Activated CD4-positive, alpha-beta T cell treated with anti-CD3 and anti-CD28 coated beads for 36 hours (primary cell): ENCODE measurements at regions of chr11 and their contacts with region 1.

Region 1: DNA sequence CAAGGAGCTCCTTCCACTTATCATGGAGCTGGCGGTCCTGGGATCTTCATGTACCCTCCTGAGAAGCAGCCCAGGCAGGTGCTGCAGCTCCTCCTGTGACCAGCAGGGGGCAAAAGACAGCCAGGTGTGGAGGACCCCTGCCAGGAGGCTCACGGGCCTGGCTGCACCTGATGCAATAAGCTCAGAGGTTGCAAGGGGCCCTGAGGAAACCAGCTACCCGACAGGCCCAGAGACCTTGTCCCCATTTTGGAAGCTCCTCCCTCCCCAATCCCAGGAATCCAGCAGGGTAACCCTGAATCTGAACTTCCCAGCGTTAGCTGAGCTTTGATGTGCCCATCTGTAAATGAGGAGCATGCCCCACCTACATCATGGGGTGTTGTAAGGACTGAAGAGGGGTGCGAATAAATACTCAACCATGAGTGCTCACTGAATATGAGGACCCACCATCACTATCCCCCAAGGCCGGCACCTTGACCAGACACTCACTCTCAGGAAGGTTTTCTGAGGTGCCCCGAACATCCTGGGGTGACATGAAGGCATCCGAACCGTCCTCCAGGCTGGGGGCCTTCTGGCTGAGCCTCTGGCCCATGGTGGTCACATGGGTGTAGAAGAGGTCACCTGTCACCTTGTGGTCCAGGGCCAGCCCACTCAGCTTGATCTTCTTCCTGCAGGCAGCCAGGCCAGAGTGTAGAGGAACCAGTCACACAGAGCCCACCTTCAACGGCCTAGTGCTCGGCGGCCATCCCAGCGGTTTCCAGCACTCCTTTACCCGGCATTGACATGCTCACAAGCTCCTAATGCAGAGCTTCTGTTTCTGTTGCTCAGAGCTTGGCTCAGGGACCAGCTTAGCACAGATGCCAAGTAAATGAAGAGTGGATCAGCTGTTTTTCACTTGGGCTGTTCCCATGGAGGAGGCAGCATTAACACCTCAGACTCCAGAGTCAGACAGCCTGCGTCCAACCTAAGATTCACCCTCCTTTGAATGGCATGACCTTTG is 21.7 kb downstream of the SLC43A1 start:
- DNase-seq: peak; percentile 88
- ATAC-seq: peak; percentile 81
- H3K4me3 Mint-ChIP-seq: no peak overlapping the region
- H3K27ac Mint-ChIP-seq: peak overlapping the region; percentile 89
- H3K4me1 Mint-ChIP-seq: peaks cover 9% of the 10 kb centered on the region
- H3K27me3 Mint-ChIP-seq: no peaks in the 10 kb centered on the region

Region 2: DNA sequence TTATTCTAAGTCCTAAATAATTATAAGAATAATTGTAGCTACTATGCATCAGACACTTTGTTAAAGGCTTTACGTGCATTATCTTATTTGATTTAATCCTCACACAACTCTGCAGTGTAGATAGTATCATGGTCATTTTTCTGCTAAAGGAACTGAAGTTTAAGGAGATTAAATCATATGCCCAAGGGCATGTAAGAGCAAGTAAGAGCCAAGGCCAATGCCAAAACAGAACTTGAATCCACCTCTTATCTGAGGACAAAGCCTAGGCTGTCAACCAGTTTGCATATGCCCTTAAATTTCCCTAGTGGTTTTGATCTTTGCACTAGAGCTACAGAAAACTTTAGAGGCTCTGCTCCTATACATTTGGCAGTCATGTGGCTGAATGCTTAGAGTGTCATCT is 570.7 kb before region 1 on chr11:
- CTCF ChIA-PET with region 1: no interaction called
- POLR2A ChIA-PET with region 1: no interaction called
- intact Hi-C with region 1: no loop called
- DNase-seq: no peak
- ATAC-seq: no peak
- H3K4me3 Mint-ChIP-seq: no peak overlapping the region
- H3K27ac Mint-ChIP-seq: no peak overlapping the region
- H3K4me1 Mint-ChIP-seq: no peaks in the 10 kb centered on the region
- H3K27me3 Mint-ChIP-seq: no peaks in the 10 kb centered on the region

Region 3: DNA sequence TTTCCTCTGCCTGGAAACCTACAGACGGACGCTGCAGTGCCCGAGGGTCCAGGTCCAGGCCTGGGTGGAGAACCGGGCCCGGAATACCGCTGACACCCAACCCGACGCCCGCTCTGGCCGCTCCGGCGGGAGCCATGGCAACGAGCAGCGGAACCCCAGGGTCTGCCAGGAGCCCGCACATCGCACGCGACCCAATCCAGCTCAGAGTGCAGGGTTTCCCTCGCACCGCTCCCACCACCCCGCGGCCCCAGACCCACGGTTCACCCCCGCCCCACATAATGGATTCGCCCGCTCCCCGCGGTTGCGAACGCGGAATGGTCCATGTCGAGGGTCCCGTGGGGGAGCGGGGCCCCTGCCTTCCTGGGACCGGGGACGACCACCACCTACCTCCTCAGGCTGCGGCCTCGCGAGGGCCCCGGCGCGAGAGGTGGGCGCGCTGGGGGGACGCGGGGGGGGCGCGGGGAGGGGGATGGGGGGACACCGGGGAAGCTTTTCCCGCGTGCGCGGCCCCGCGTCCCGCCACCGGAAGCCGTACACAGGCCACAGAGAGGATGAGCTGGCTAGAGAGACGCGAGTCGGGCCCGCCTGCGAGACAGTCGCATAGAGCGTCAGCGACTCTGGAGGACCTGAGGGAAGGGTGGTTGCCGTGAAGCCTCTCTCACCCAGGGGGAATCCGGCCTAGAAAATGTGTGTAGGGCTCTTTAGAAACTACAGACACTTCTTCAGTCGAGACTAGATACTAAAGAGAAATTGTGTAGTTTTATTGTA is 158.3 kb before region 1 on chr11 and contains the start of gene SSRP1:
- CTCF ChIA-PET with region 1: interaction called, 12 read pairs
- POLR2A ChIA-PET with region 1: no interaction called
- intact Hi-C with region 1: no loop called
- DNase-seq: peak; percentile 93
- ATAC-seq: peak; percentile 99
- H3K4me3 Mint-ChIP-seq: peak within 1 kb of the TSS; percentile 97
- H3K27ac Mint-ChIP-seq: peak within 1 kb of the TSS; percentile 100
- H3K4me1 Mint-ChIP-seq: peaks cover 43% of the 10 kb centered on the region
- H3K27me3 Mint-ChIP-seq: no peaks in the 10 kb centered on the region
- total RNA-seq, gene SSRP1: 279 to 296 TPM

Region 4: DNA sequence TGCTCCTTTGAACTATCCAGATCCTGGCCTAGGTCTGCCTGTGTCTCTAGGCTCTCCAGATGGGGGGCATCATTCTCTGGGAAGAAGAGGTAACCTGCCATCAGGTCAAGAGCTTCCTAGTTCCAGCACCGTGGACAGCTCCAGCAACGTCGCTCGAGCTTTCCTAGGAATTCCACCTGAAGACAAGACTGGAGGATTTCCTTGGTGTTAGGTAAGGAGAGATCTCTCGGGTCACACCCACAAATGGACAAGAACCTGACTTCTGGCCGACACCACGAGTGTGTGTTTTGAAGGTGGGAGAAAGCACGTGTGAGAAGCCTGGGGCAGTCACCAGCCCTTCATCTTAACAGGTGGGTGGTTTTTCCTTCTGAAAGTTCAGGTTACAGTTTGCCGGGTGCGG is 114.1 kb before region 1 on chr11:
- CTCF ChIA-PET with region 1: no interaction called
- POLR2A ChIA-PET with region 1: no interaction called
- intact Hi-C with region 1: no loop called
- DNase-seq: peak; percentile 15
- ATAC-seq: no peak
- H3K4me3 Mint-ChIP-seq: no peak overlapping the region
- H3K27ac Mint-ChIP-seq: no peak overlapping the region
- H3K4me1 Mint-ChIP-seq: no peaks in the 10 kb centered on the region
- H3K27me3 Mint-ChIP-seq: peaks cover 11% of the 10 kb centered on the region

Region 5: DNA sequence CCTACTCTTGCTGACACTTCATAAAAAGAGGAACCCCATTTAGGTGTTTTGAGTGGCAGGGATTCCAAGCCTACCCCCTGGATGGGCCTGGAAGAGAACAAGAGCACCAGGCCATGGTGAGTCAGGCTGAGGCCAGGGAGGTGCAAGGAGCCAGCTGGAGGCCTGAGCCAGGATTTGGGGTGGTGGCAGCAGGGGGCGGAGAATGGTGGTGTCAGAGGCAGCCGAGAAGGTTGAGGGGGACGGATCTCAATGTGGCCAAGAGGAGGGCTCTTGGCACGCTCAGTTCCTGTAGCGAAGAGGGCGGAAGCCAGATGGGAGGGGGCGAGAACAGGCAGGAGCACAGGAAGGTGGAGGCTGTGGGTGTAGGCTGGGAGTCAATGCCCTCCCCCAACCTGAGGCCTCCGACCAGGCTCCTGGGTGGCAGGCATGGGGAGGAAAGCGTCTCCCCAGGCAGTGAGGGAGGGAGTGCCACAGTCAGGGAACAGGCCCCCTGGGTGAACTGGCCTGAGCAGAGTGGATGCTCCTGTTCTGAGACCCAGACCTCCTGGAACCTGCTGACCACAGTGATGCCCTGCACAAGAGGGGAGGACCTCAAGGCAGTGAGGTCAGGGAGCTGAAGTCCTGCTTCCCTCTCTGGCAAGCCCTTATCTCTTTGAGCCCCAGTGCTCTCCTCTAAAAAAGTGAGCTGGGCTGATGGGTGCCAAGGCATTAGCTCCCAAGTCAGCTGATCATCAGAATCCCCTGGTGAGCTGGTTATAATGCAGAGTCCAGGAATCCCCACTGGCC is 19.6 kb before region 1 on chr11:
- CTCF ChIA-PET with region 1: interaction called, 35 read pairs
- POLR2A ChIA-PET with region 1: interaction called, 3 read pairs
- intact Hi-C with region 1: no loop called
- DNase-seq: peak; percentile 66
- ATAC-seq: peak; percentile 73
- H3K4me3 Mint-ChIP-seq: peak overlapping the region; percentile 8
- H3K27ac Mint-ChIP-seq: peak overlapping the region; percentile 14
- H3K4me1 Mint-ChIP-seq: peaks cover 30% of the 10 kb centered on the region
- H3K27me3 Mint-ChIP-seq: peaks cover 5% of the 10 kb centered on the region

Region 6: DNA sequence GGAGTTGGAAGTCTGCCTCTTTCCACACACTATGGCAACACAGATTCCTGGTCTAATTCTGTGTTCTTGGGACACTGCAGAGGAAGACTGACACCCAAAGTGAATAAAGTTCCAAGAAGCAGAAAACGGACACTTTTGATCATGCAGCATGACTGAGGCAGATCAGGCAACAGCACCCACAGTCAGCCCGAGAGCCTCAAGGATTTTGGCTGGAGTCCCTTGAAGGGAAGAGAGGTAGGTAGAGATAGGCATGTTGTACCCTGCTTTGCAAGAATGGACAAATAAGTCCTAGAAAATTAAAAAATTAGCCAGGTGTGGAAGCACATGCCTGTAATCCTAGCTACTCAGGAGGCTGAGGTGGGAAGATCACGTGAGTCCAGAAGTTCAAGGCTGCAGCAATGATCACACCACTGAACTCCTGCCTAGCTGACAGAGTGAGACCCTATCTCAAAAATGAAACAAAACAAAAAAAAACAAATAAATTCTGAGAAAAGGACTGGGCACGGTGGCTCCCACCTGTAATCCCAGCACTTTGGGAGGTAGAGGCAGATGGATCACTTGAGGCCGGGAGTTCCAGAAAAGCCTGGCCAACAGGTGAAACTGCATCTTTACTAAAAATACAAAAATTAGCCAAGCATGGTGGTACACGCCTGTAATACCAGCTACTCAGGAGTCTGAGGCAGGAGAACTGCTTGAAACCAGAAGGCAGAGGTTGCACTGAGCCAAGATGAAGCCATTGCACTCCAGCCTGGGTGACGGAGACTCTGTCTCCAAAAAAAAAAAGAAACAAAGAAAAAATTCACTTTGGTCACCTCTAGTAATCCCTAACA is 14.8 kb after region 1 on chr11:
- CTCF ChIA-PET with region 1: interaction called, 112 read pairs
- POLR2A ChIA-PET with region 1: no interaction called
- intact Hi-C with region 1: no loop called
- DNase-seq: no peak
- ATAC-seq: no peak
- H3K4me3 Mint-ChIP-seq: no peak overlapping the region
- H3K27ac Mint-ChIP-seq: no peak overlapping the region
- H3K4me1 Mint-ChIP-seq: peaks cover 22% of the 10 kb centered on the region
- H3K27me3 Mint-ChIP-seq: no peaks in the 10 kb centered on the region

Region 7: GRCh38 chr11:57556061-57556460 is 62.3 kb after region 1 on chr11:
- CTCF ChIA-PET with region 1: no interaction called
- POLR2A ChIA-PET with region 1: no interaction called
- intact Hi-C with region 1: no loop called
- DNase-seq: no peak
- ATAC-seq: no peak
- H3K4me3 Mint-ChIP-seq: no peak overlapping the region
- H3K27ac Mint-ChIP-seq: no peak overlapping the region
- H3K4me1 Mint-ChIP-seq: peaks cover 1% of the 10 kb centered on the region
- H3K27me3 Mint-ChIP-seq: no peaks in the 10 kb centered on the region

Region 8: DNA sequence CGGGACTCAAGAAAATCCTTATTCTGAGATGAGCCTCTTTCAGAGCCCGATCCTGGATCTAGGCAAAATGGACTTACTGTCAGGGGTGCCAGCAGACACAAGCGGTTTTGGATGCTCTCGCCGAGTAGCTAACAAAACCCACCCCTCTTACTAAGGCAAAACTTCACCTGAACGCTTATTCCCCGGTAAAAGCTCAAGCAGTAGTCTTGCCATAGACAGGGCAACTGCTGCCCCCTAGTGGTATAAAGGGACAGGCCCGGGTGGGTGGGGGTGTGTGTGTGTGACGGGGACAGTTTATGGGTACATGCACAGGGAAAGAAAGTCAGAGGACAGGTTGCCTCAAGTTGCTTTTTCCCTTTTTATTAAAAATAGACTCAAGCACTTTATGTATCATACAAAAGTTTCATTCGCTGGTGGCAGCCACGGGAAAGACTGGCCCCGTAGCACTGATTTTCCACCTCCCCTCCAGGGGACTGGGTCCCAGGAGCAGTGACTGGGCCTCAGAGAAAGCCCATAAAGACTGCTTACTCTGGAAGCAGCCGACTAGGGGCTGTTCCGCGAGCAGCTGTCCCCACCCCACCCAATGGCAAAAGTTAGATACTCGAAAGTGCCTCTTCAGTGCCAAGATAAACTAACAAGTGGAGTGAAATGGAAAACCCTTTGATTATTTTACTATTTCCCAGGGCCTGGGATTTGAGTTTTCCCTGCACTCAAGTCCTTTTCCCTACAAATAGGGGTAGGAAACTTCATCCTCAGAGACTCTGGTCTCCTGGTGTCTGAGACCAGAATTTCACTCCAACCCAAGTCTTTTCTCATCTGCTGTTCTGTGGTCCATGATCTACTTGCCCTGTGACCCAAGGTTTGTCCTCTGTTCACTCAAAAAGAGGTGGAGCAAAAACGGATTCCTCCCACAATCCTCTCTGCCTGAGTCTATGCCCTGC is 151.2 kb after region 1 on chr11:
- CTCF ChIA-PET with region 1: interaction called, 80 read pairs
- POLR2A ChIA-PET with region 1: no interaction called
- intact Hi-C with region 1: loop called (anchors 1 to 2 kb)
- DNase-seq: peak; percentile 93
- ATAC-seq: peak; percentile 79
- H3K4me3 Mint-ChIP-seq: no peak overlapping the region
- H3K27ac Mint-ChIP-seq: no peak overlapping the region
- H3K4me1 Mint-ChIP-seq: peaks cover 33% of the 10 kb centered on the region
- H3K27me3 Mint-ChIP-seq: peaks cover 47% of the 10 kb centered on the region